Gastrocnemius medialis (tissue), 4 donors: ENCODE measurements at regions of chrX and their contacts with region 1.

Region 1: DNA sequence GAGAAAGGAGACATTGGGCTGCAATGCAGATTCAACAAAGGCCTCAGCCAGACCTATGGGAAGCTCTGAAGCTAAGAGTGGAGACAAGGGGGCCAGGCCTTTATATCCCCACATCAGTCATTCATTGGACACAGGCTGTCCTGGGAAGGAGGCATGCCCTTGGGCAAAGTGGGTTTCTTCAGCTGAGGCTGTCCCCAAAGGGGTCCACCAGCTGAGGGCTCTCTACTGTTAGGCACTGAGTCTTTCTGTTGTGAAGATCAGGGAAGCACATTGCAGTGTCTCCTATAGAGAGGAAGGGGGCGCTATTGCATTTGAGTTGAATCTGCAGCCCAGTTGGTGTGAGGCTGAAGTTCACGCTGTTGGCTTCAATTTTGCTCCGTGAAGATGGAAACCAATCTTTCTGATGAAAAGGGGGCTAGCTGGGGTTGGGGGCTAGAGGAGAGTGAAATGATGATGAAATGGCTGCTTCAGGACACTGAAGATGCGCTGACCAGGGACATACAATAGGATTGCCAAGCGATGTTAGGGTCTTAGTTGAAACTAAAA is 48.0 kb downstream of the SLC25A5 start:
- DNase-seq: peak; percentile 5 to 16
- ATAC-seq: peak; percentile 62 to 87
- H3K4me3 ChIP-seq: no peak overlapping the region
- H3K27ac ChIP-seq: no peak overlapping the region
- H3K4me1 ChIP-seq: no peaks in the 10 kb centered on the region
- H3K27me3 ChIP-seq: no peaks in the 10 kb centered on the region
- CTCF ChIP-seq: peak; percentile 33 to 71 (median 61)
- POLR2A ChIP-seq: no peak

Region 2: GRCh38 chrX:119410027-119410823 is 106.0 kb before region 1 on chrX:
- in situ Hi-C with region 1: no loop called
- intact Hi-C with region 1: no loop called
- DNase-seq: peak; percentile 3 to 60
- ATAC-seq: no peak
- H3K4me3 ChIP-seq: no peak overlapping the region
- H3K27ac ChIP-seq: no peak overlapping the region
- H3K4me1 ChIP-seq: no peaks in the 10 kb centered on the region
- H3K27me3 ChIP-seq: no peaks in the 10 kb centered on the region
- CTCF ChIP-seq: no peak
- POLR2A ChIP-seq: no peak

Region 3: DNA sequence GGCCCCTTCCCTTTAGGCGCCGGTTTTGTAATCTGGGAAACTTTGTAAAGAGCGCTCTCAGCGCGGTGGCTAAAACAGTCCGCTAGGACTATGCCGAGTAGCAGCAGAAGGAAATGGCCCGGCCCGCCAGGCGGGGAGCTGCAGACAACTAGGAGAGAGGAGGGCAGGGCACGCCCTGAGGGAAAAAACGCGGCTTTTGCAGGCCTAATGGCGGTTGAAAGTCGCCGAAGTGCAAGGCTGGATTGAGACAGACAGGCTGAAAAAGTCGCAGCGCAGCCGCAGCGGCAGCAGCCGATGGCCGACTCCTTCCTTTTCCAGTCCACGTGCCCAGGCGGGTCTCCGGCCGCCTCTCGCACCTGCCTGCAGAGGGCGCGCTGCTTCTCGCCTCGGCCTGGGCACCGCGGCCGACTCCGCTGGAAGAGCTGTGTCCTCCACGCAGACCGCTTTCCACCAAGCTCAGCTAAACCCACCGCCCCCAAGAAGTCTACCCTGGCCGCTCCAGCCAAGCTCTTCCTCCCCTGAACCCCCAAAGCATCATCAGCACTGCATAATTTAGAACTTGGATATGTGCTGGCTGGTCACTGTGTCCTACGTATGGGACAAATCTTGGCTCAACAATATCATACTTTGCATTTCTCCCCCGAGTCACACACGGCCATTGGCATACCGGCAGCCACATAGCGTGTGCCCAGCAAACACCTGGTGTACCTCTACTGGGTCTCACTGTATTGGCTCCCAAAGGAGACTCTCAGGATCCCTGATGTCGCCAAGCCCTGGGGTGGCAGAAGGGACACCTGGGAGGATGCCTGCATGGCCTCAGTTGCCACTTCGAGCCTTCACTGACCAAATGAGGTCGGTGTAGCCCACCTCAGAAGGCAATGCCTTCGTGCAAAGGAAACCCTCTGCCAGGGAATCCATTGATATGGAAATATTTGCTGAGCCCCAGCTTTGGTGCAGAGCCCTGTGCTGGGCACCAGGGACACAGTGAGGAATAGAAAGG is 33.4 kb before region 1 on chrX:
- in situ Hi-C with region 1: no loop called
- intact Hi-C with region 1: loop called (anchors 1 kb)
- DNase-seq: peak; percentile 15 to 56
- ATAC-seq: peak; percentile 58 to 72
- H3K4me3 ChIP-seq: peak overlapping the region; percentile 49 to 58 (median 54)
- H3K27ac ChIP-seq: peak overlapping the region; percentile 59 to 83 (median 78)
- H3K4me1 ChIP-seq: peaks cover 0 to 4% of the 10 kb centered on the region in 2 donors
- H3K27me3 ChIP-seq: no peaks in the 10 kb centered on the region
- CTCF ChIP-seq: peak; percentile 42 to 78 (median 65)
- POLR2A ChIP-seq: no peak

Region 4: DNA sequence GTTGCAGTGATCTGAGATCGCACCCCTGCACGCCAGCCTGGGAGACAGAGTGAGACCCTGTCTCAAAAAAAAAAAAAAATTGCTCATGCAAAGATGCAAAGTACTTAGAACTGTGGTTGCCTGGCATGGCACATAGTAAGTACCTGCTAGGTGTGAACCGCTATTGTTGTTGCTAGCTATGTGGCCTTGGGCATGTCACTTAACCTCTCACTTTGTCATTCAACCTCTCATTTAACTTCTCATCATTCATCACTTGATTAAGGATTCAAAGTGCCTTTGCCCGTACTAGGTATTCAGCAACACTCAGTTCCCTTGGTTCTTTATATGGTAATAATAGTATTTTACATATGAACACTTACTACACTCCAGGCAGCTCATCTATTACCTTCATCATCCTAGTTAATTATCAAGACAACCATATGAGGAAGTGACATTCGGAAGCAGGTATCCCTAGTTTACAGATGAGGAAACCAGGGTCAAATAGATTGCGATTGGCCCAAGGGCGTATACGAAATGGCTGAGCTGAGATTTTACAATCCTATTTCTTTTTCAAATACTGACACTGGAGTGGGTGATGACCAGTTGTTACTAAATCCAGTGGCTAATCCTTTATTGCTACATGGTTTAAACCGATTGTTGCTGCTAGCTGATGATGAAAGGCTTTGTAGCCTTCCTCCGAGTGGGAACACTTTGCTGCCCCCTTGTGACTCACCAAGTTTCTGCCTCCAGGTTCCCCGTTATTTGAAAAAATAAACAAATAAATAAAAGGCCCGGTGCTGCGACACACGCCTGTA is 213.4 kb after region 1 on chrX:
- in situ Hi-C with region 1: loop called in 2 of 4 experiments (anchors 10 to 25 kb)
- intact Hi-C with region 1: loop called (anchors 2 kb)
- DNase-seq: peak; percentile 22 to 31
- ATAC-seq: peak in 1 of 2 donors; percentile 55
- H3K4me3 ChIP-seq: no peak overlapping the region
- H3K27ac ChIP-seq: no peak overlapping the region
- H3K4me1 ChIP-seq: no peaks in the 10 kb centered on the region
- H3K27me3 ChIP-seq: no peaks in the 10 kb centered on the region
- CTCF ChIP-seq: peak in 4 of 5 experiments; percentile 11 to 53 (median 40)
- POLR2A ChIP-seq: no peak

Region 5: GRCh38 chrX:119784747-119785446 is 268.7 kb after region 1 on chrX:
- in situ Hi-C with region 1: no loop called
- intact Hi-C with region 1: no loop called
- DNase-seq: no peak
- ATAC-seq: no peak
- H3K4me3 ChIP-seq: no peak overlapping the region
- H3K27ac ChIP-seq: no peak overlapping the region
- H3K4me1 ChIP-seq: peaks cover 4 to 21% of the 10 kb centered on the region in 2 donors
- H3K27me3 ChIP-seq: no peaks in the 10 kb centered on the region
- CTCF ChIP-seq: no peak
- POLR2A ChIP-seq: no peak